ENCODE measurements at regions of chr4 and their contacts with region 1.

Region 1: DNA sequence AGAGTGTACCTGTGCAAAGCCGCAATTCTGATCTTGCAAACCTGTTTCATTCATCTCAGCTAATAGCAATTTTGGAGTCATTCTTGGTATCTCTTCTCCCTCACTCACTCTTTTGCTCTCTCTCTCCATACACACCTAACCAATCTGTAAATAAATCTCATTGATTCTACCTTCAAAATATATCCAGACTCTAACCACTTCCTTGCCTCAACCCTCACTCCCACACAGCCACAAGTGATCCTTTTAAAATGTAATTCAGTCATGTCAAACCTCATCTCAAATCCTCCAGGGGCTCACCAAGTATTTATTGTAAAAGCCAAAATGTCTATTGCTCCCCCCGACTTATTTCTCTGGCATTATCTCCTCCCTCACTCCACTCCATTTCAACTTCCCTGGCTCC is 51.7 kb upstream of the SLC10A4 start:
- DNase-seq: peak in 1 of 35 experiments; percentile 4
- ATAC-seq: peak; percentile 31 to 71 (median 52)
- H3K4me3 ChIP-seq: no peak overlapping the region
- H3K4me3 Mint-ChIP-seq: peak overlapping the region in 1 of 3 donors; percentile 2
- H3K27ac ChIP-seq: no peak overlapping the region
- H3K27ac Mint-ChIP-seq: peak overlapping the region; percentile 3 to 19
- H3K4me1 ChIP-seq: peaks cover 6 to 12% of the 10 kb centered on the region in 2 experiments
- H3K4me1 Mint-ChIP-seq: peaks cover 37 to 41% (median 40%) of the 10 kb centered on the region in 3 donors
- H3K27me3 ChIP-seq: no peaks in the 10 kb centered on the region
- H3K27me3 Mint-ChIP-seq: no peaks in the 10 kb centered on the region

Region 2: GRCh38 chr4:47334652-47335051 is 1096.7 kb before region 1 on chr4:
- CTCF ChIA-PET with region 1: no interaction called
- POLR2A ChIA-PET with region 1: no interaction called
- DNase-seq: no peak
- ATAC-seq: no peak
- H3K4me3 ChIP-seq: no peak overlapping the region
- H3K4me3 Mint-ChIP-seq: no peak overlapping the region
- H3K27ac ChIP-seq: no peak overlapping the region
- H3K27ac Mint-ChIP-seq: no peak overlapping the region
- H3K4me1 ChIP-seq: no peaks in the 10 kb centered on the region
- H3K4me1 Mint-ChIP-seq: no peaks in the 10 kb centered on the region
- H3K27me3 ChIP-seq: peaks cover 0 to 3% of the 10 kb centered on the region in 2 experiments
- H3K27me3 Mint-ChIP-seq: peaks cover 12 to 26% of the 10 kb centered on the region in 2 donors

Region 3: DNA sequence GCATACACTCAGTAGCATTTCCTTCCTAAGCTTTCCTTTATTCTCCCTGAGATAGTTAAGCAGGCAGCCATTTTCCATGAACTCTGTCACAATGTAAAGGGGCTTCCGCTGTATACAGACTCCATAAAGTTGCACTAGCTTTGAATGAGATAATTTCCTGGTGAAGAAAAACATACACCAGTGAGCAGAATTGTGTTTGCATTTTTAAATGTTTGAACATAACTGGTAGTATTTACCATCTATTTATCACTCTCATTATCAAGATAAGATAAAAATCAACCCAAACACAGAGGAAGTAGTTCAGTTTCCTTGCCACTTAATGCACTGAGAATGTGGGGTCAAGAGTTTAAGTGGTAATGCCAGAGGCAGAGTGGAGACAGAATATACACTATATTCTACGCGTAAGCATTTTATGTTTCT is 351.4 kb before region 1 on chr4:
- CTCF ChIA-PET with region 1: interaction called in 1 of 2 experiments, 15 read pairs
- POLR2A ChIA-PET with region 1: no interaction called
- DNase-seq: no peak
- ATAC-seq: no peak
- H3K4me3 ChIP-seq: no peak overlapping the region
- H3K4me3 Mint-ChIP-seq: no peak overlapping the region
- H3K27ac ChIP-seq: no peak overlapping the region
- H3K27ac Mint-ChIP-seq: no peak overlapping the region
- H3K4me1 ChIP-seq: no peaks in the 10 kb centered on the region
- H3K4me1 Mint-ChIP-seq: peaks cover 17 to 36% (median 24%) of the 10 kb centered on the region in 3 donors
- H3K27me3 ChIP-seq: no peaks in the 10 kb centered on the region
- H3K27me3 Mint-ChIP-seq: no peaks in the 10 kb centered on the region